Activated CD4-positive, alpha-beta T cell treated with anti-CD3 and anti-CD28 coated beads for 36 hours (primary cell): ENCODE measurements at regions of chr1 and their contacts with region 1.

Region 1: GRCh38 chr1:203744075-203744972 is 20.7 kb upstream of the LAX1 start:
- DNase-seq: peak; percentile 35
- ATAC-seq: peak; percentile 65
- H3K4me3 Mint-ChIP-seq: peak overlapping the region; percentile 19
- H3K27ac Mint-ChIP-seq: peak overlapping the region; percentile 76
- H3K4me1 Mint-ChIP-seq: peaks cover 21% of the 10 kb centered on the region
- H3K27me3 Mint-ChIP-seq: no peaks in the 10 kb centered on the region

Region 2: DNA sequence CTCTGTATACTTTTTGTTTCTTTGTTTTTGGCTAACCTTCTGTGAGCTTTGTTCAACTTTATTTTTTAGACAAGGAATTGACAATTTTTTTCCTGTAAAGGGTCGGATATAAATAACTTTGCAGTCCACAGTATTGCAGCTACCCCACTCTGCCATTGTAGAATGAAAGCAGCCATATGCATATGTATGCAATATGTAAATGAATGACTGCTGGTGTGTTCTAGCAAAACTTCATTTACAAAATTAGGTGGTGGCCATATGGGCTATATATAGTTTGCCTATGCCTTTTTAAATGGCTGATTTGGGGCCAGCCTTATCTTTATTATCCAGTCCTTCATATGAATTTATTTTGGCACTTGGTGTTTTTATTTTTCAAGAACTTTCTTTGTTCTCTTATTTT is 99.1 kb after region 1 on chr1:
- CTCF ChIA-PET with region 1: no interaction called
- POLR2A ChIA-PET with region 1: interaction called, 10 read pairs
- intact Hi-C with region 1: no loop called
- DNase-seq: no peak
- ATAC-seq: no peak
- H3K4me3 Mint-ChIP-seq: no peak overlapping the region
- H3K27ac Mint-ChIP-seq: no peak overlapping the region
- H3K4me1 Mint-ChIP-seq: no peaks in the 10 kb centered on the region
- H3K27me3 Mint-ChIP-seq: no peaks in the 10 kb centered on the region

Region 3: DNA sequence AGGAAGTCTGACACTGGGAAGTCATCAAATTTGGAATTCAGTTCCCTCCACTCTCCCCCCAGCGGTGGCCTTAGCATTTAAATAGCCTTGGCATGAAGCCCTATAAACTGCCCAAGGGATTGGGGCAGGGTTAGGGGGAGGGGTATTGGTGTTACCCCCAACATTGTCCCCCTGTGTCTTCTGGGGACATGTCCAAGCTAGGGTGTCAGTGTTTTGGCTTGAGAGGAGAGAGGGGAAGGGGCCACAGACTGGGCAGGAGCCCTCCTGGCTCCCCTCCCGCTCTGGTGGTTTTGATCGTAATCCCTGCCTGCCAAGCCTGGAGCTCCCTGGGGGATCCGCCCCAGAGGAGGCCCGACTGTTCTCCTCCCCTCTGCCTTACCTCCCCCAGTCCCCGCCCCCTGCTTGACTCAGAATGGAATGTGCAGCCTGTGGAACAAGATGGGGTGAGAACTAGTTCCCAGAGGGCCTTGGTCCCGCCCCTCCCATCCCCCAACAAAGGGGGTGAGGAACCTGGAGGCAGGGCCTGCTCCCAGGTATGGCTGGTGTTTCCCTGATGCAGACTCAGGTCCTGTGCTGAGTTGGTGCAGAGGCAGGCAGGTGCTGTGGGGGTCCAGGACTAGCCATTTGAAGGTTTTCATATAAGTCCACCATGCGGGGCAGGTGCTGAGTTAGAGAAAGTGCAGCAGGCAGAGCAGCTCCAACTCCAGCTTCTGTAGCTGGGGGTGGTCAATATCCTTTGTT is 336.0 kb after region 1 on chr1:
- CTCF ChIA-PET with region 1: no interaction called
- POLR2A ChIA-PET with region 1: no interaction called
- intact Hi-C with region 1: no loop called
- DNase-seq: no peak
- ATAC-seq: no peak
- H3K4me3 Mint-ChIP-seq: no peak overlapping the region
- H3K27ac Mint-ChIP-seq: no peak overlapping the region
- H3K4me1 Mint-ChIP-seq: peaks cover 1% of the 10 kb centered on the region
- H3K27me3 Mint-ChIP-seq: peaks cover 27% of the 10 kb centered on the region